ENCODE measurements at regions of chr9 and their contacts with region 1.

Region 1: GRCh38 chr9:21812946-21813568 is 10.6 kb downstream of the MTAP start:
- DNase-seq: peak; percentile 49 to 77 (median 59)
- H3K4me3 ChIP-seq: no peak overlapping the region
- H3K4me3 Mint-ChIP-seq: peak overlapping the region in 3 of 7 donors; percentile 40 to 57 (median 48)
- H3K27ac ChIP-seq: no peak overlapping the region
- H3K27ac Mint-ChIP-seq: peak overlapping the region in 5 of 8 donors; percentile 36 to 86 (median 40)
- H3K4me1 ChIP-seq: peaks cover 13% of the 10 kb centered on the region
- H3K4me1 Mint-ChIP-seq: peaks cover 14 to 19% (median 14%) of the 10 kb centered on the region in 3 donors
- H3K27me3 ChIP-seq: no peaks in the 10 kb centered on the region
- H3K27me3 Mint-ChIP-seq: no peaks in the 10 kb centered on the region

Region 2: DNA sequence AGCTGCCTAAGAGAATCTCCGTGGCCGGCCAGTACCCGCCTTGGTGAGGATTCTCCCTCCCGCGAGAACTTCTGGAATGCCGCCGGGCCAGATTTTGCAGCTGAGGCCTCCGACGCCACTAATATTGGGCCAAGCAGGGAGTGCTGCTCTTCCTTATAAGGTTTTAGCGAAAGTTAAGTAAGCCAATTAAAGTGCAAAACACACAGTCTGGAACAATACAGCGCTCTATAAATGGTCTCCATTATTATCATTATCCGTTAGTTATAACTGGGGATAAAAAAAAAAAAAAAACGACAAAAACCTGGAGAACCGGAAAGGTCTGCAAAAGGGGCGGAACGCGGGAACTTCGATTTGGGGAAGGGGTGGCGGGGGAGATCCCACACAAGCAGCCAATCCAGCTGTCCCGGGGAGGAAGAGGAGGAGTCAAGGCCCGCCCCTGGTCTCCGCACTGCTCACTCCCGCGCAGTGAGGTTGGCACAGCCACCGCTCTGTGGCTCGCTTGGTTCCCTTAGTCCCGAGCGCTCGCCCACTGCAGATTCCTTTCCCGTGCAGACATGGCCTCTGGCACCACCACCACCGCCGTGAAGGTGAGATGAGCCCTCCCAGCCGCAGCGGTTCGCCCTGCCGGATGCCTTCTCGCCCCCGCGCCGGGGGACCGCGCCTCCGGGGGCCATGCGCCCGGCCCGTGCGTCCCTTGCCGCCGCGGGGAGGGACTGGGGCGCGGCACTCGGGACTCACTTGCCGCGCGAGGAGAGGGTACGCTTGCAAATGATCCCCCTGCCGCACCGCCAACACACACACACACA is 10.7 kb before region 1 on chr9 and contains the start of gene MTAP:
- CTCF ChIA-PET with region 1: interaction called, 10 read pairs
- POLR2A ChIA-PET with region 1: no interaction called
- DNase-seq: peak; percentile 49 to 76 (median 68)
- H3K4me3 ChIP-seq: peak within 1 kb of the TSS; percentile 82
- H3K4me3 Mint-ChIP-seq: peak within 1 kb of the TSS; percentile 94 to 100 (median 99)
- H3K27ac ChIP-seq: peak within 1 kb of the TSS; percentile 30
- H3K27ac Mint-ChIP-seq: peak within 1 kb of the TSS; percentile 93 to 99 (median 96)
- H3K4me1 ChIP-seq: peaks cover 27% of the 10 kb centered on the region
- H3K4me1 Mint-ChIP-seq: peaks cover 36 to 48% (median 46%) of the 10 kb centered on the region in 3 donors
- H3K27me3 ChIP-seq: no peaks in the 10 kb centered on the region
- H3K27me3 Mint-ChIP-seq: peaks cover 13 to 19% of the 10 kb centered on the region in 2 donors
- total RNA-seq, gene MTAP: 77.4 to 81.6 TPM

Region 3: GRCh38 chr9:22037954-22038690 is 225.1 kb after region 1 on chr9:
- CTCF ChIA-PET with region 1: interaction called, 73 read pairs
- POLR2A ChIA-PET with region 1: no interaction called
- DNase-seq: peak in 2 of 5 donors; percentile 16 to 23
- H3K4me3 ChIP-seq: no peak overlapping the region
- H3K4me3 Mint-ChIP-seq: no peak overlapping the region
- H3K27ac ChIP-seq: no peak overlapping the region
- H3K27ac Mint-ChIP-seq: no peak overlapping the region
- H3K4me1 ChIP-seq: no peaks in the 10 kb centered on the region
- H3K4me1 Mint-ChIP-seq: peaks cover 0 to 17% (median 14%) of the 10 kb centered on the region in 3 donors
- H3K27me3 ChIP-seq: no peaks in the 10 kb centered on the region
- H3K27me3 Mint-ChIP-seq: no peaks in the 10 kb centered on the region

Region 4: DNA sequence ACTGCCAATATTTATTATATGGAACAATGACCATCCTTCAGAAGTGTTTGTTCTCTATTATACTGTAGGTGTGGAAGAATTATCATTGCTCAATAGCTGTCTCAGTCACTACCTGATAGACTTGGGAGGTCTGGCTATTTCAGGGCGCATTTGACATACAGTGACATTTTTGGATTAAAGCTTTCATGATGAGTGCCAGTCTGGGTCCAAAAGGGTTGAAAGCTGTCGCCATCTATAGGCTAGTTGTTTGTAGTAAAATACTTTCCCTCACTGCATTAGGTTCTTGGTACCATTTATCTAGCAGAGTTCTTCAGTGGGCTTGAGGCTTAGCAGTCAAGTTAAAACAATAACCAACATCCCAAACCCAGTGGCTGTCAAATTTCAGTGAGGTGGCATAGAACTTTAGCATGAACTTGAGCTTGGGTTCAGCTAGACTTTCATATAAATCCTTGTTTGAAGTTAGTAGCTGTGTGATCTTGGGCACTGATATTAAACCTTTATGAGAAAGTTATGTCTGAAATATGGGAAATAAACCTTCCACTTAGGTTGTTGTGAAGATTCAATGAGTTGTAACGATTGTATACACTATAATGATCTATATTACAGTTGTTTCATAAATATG is 306.6 kb after region 1 on chr9:
- CTCF ChIA-PET with region 1: interaction called, 10 read pairs
- POLR2A ChIA-PET with region 1: no interaction called
- DNase-seq: peak in 2 of 5 donors; percentile 1 to 11
- H3K4me3 ChIP-seq: no peak overlapping the region
- H3K4me3 Mint-ChIP-seq: no peak overlapping the region
- H3K27ac ChIP-seq: no peak overlapping the region
- H3K27ac Mint-ChIP-seq: peak overlapping the region in 1 of 8 donors; percentile 35
- H3K4me1 ChIP-seq: peaks cover 5% of the 10 kb centered on the region
- H3K4me1 Mint-ChIP-seq: no peaks in the 10 kb centered on the region
- H3K27me3 ChIP-seq: no peaks in the 10 kb centered on the region
- H3K27me3 Mint-ChIP-seq: peaks cover 0 to 6% of the 10 kb centered on the region in 2 donors

Region 5: DNA sequence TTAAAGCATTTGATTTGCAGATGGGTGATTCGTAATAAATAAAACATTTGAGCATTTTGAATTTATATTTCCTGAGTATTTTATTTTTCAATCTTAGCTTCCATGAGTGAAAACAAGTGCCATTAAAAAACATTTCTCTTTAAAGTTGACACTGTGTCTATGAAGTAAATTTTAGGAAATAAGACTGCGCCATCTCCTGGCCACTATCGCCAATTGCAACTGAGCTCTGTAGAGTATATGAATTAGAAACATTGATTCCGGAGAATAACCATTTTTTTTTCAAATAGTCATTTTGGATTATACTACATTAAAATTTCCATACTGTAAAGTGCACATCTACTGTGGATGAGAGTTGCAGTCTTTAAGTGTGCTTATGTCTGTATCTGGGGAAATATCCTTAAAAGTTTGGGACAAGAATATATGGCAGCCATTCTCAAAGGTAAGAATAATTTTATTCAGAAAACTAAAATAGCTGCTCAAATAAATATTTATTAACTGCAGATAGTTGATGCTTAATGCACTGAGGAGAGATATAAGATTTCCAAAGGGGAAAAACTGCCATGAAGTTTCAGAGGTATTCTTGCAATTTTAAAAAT is 639.5 kb after region 1 on chr9:
- CTCF ChIA-PET with region 1: interaction called, 14 read pairs
- POLR2A ChIA-PET with region 1: no interaction called
- DNase-seq: peak; percentile 6 to 57 (median 12)
- H3K4me3 ChIP-seq: no peak overlapping the region
- H3K4me3 Mint-ChIP-seq: no peak overlapping the region
- H3K27ac ChIP-seq: no peak overlapping the region
- H3K27ac Mint-ChIP-seq: no peak overlapping the region
- H3K4me1 ChIP-seq: no peaks in the 10 kb centered on the region
- H3K4me1 Mint-ChIP-seq: peaks cover 0 to 6% (median 0%) of the 10 kb centered on the region in 3 donors
- H3K27me3 ChIP-seq: peaks cover 6% of the 10 kb centered on the region
- H3K27me3 Mint-ChIP-seq: peaks cover 15 to 44% of the 10 kb centered on the region in 2 donors

Measured in CD8-positive, alpha-beta memory T cell (primary cell).